Cardiac septum (tissue), 1 donor: ENCODE measurements at regions of chr18 and their contacts with region 1.

Region 1: GRCh38 chr18:76838182-76838581 is 15.8 kb downstream of the ZNF236 start:
- DNase-seq: no peak

Region 2: DNA sequence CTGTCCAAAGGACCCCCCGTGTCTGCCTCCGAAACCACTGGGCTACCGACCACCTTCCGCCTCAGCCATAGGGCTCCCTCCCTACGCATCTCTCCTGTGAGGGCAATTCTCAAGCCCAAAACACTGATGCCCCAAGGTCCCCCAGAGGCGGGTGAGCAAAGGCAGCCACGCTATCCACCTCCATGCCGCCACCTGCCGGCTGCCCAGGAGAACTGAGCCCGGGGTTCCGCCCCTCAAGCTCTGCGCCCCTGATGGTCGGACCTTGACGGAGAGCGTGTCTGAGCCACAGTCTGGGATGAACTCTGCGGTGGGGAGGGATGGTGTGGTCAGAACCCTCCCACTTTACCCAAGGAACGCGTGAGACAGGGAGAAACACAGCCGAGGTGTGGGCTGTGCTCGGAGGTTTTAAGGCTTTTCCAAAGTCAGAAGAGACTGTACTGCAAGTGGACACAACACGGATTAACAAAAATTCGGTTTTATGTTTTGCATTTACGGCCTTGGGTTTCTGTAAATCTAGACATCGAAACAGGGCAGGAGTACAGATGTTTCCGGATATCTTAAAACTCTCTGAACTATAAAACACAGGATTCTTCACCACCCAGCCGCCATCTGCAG is 457.3 kb before region 1 on chr18:
- intact Hi-C with region 1: loop called (anchors 10 kb)
- DNase-seq: peak; percentile 77

Region 3: DNA sequence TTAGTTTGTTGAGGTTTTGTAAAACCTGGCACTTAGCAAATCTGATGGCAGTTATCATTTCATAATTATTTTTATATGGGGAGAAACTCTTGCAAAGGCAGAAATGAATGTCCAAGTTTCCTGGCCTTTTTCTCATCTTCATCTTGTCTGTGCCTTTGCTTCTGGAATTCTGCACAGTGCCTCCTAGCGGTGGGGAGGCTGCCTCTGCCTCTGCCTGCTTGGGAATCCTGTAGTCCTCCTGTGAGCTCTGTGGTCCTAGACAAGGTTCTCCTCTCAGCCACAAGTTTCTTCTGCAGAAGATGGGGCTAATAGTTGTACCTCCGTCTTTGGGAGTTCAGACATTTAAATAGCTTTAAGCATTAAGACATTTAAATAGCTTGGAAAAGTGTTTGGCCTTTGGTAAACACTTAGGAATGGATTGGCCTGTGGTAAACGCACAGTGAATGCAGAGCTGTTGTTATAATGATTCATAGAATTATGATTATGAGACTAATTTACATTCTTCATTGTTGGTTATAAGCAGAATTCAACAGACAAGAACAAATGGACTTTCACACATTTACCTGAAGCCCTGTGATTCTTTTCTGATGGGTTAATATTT is 85.4 kb after region 1 on chr18:
- intact Hi-C with region 1: no loop called
- DNase-seq: no peak